Calu3 (cell line): ENCODE measurements at regions of chr3 and their contacts with region 1.

Region 1: DNA sequence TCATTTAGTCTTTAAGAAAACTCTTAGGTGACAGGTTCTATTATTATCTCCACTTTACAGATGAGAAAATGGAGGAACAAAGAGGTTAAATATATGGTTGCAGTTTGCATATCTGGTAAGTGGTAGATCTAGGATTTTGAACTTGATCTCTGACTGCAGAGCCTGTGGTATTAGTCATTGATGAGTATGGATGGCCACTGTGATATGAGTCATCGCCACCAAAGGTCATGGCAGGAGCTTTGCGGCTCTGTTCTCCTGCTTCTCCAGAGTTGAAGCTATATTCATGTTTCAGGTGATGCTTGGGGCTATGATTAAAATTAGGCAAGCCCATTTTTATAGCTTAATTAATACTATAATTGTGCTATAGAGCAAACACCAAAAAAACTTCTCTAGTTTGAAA is 306.2 kb upstream of the DPPA4 start:
- DNase-seq: peak; percentile 25
- H3K4me3 Mint-ChIP-seq: no peak overlapping the region
- H3K27ac Mint-ChIP-seq: no peak overlapping the region
- H3K4me1 Mint-ChIP-seq: peaks cover 37% of the 10 kb centered on the region
- H3K27me3 Mint-ChIP-seq: no peaks in the 10 kb centered on the region
- CTCF ChIP-seq: no peak

Region 2: DNA sequence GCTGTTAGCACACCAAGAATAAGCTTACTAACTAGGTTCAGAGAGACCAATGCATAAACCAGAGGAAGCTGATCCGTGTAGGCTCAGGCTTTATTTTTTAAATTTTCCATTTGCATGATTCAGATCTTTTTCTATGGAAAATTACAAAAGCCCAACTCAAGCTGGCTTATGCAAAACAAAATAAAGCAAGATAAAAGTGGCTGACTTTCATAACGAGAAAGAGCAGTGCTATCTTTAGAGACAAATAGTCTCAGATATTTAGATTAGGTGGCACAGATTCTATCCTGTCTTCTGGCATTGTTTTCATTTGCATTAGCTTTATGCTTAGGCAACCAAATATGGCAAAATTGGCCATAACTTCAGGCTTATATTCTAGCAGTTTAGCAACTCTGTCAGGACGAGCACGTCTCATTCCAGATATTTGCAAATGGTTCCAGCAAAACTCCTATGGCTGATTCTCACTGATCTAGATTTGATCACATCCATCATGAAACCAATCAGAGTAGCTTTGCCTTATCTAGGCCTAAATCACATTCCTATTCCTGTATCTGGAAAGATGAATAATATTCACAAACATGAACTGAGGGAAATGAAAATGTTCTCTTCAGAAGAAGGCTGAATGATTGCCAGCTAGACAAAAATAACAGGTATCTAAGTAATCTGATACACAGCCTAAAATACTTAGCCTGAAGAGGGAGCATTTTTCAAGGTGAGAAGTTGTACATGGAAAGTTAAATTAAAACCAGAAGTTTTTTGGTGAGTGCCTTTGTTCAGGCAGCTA is 89.8 kb before region 1 on chr3:
- CTCF ChIA-PET with region 1: interaction called, 3 read pairs
- intact Hi-C with region 1: loop called (anchors 10 kb)
- DNase-seq: no peak
- H3K4me3 Mint-ChIP-seq: no peak overlapping the region
- H3K27ac Mint-ChIP-seq: no peak overlapping the region
- H3K4me1 Mint-ChIP-seq: peaks cover 24% of the 10 kb centered on the region
- H3K27me3 Mint-ChIP-seq: no peaks in the 10 kb centered on the region
- CTCF ChIP-seq: no peak